ENCODE measurements at regions of chr2 and their contacts with region 1.

Region 1: GRCh38 chr2:219530048-219530963 is 13.3 kb downstream of the CHPF start:
- DNase-seq: peak; percentile 79 to 84 (median 81)
- H3K4me3 ChIP-seq: no peak overlapping the region
- H3K4me3 Mint-ChIP-seq: no peak overlapping the region
- H3K27ac ChIP-seq: no peak overlapping the region
- H3K27ac Mint-ChIP-seq: peak overlapping the region in 1 of 7 donors; percentile 41
- H3K4me1 ChIP-seq: no peaks in the 10 kb centered on the region
- H3K4me1 Mint-ChIP-seq: peaks cover 0 to 7% (median 0%) of the 10 kb centered on the region in 4 donors
- H3K27me3 ChIP-seq: peaks cover 26% of the 10 kb centered on the region
- H3K27me3 Mint-ChIP-seq: peaks cover 53 to 66% of the 10 kb centered on the region in 2 donors

Region 2: DNA sequence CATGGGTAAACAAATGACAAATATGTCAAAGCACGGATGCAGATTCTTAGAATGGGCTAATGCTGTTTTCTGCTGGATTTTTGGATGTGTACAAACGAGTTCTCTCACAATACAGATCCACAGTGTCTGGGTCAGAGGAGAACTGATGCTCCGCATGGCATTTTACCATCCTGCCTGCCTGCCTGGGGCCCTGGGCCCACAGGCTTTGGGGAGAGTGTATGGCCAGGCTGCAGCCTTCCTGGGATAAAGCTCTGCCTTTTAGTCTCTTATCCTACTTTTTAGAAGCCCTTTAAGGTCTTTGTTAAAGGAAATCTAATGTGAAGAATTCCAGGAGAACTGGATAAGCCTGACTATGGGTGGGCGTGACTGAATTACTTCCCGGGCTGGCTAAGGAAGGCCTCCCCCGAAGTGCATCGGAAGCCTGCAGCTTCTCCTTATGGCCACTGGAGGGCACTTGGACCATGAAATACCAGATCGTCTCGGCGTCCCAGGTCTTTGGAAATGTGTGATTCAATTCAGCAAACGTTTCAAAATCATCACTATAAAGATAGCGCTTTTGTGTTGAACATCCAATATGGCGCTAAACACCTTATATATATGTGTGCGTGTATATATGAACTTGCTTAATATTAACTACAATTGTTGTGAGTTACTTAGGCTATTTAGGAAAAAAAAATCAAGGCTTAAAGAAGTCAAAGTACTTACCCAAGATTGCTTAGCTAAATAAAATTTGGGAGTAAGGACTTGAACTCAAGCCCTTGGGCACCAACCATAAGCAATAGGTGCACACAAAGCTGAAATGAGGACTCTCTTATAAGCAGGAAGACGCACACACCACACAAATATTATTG is 127.4 kb before region 1 on chr2:
- CTCF ChIA-PET with region 1: interaction called, 130 read pairs
- POLR2A ChIA-PET with region 1: interaction called, 4 read pairs
- intact Hi-C with region 1: loop called (anchors 1 kb)
- DNase-seq: peak; percentile 51 to 66 (median 58)
- H3K4me3 ChIP-seq: no peak overlapping the region
- H3K4me3 Mint-ChIP-seq: no peak overlapping the region
- H3K27ac ChIP-seq: no peak overlapping the region
- H3K27ac Mint-ChIP-seq: no peak overlapping the region
- H3K4me1 ChIP-seq: no peaks in the 10 kb centered on the region
- H3K4me1 Mint-ChIP-seq: peaks cover 0 to 7% (median 4%) of the 10 kb centered on the region in 4 donors
- H3K27me3 ChIP-seq: no peaks in the 10 kb centered on the region
- H3K27me3 Mint-ChIP-seq: peaks cover 2 to 4% of the 10 kb centered on the region in 2 donors

Region 3: DNA sequence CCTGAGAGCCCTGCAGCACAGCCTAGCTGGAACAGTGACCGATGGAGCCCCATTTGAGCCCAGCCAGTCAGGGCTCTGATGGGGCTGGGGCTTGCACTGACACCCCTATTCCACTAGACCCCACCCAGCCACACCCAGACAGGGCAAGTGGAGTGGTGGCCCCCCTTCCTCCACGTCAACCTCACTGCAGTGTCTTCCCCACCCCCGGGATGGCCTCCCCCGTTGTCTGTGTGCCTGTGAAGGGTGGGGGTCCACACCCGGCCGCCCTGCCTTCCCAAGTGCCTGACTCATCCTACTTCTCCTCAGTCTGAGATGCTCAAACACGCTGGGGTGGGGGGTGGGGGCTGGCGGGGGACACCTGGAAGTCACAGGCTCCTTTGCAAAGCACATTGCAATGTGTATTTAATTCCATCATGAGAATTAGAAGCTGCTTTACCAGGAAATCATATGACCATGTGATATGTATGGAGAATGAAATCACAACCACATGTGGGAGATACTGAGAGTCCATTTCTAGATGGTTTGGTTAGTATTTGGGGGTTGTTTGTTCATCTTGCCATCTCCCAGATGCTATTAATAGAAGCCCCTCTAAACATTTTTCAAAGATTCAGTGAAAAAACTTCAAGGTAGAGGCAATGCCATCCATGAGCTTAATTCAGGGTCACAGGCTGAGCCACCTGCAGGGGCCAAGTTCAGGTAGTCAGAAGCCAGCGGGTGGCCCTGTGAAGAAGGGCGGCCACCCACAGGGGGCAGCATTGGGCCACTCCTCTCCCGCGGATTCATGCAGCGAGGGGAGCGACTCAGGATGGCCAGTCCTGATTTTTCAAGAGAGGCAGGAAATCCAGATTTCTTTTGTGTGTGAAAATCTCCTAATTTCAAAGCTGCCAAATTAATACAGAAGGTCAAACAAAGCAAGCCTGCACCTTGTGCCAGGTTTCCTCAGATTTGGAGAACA is 54.3 kb before region 1 on chr2:
- CTCF ChIA-PET with region 1: interaction called, 57 read pairs
- POLR2A ChIA-PET with region 1: no interaction called
- intact Hi-C with region 1: loop called (anchors 1 kb)
- DNase-seq: peak in 4 of 5 donors; percentile 35 to 46 (median 40)
- H3K4me3 ChIP-seq: no peak overlapping the region
- H3K4me3 Mint-ChIP-seq: no peak overlapping the region
- H3K27ac ChIP-seq: no peak overlapping the region
- H3K27ac Mint-ChIP-seq: no peak overlapping the region
- H3K4me1 ChIP-seq: no peaks in the 10 kb centered on the region
- H3K4me1 Mint-ChIP-seq: peaks cover 0 to 6% (median 5%) of the 10 kb centered on the region in 4 donors
- H3K27me3 ChIP-seq: no peaks in the 10 kb centered on the region
- H3K27me3 Mint-ChIP-seq: peaks cover 0 to 14% of the 10 kb centered on the region in 2 donors

Region 4: GRCh38 chr2:219509780-219510511 is 20.4 kb before region 1 on chr2:
- CTCF ChIA-PET with region 1: interaction called, 26 read pairs
- POLR2A ChIA-PET with region 1: interaction called, 3 read pairs
- intact Hi-C with region 1: loop called (anchors 1 kb)
- DNase-seq: peak; percentile 36 to 66 (median 40)
- H3K4me3 ChIP-seq: no peak overlapping the region
- H3K4me3 Mint-ChIP-seq: peak overlapping the region in 7 of 8 donors; percentile 28 to 75 (median 53)
- H3K27ac ChIP-seq: no peak overlapping the region
- H3K27ac Mint-ChIP-seq: peak overlapping the region in 1 of 7 donors; percentile 36
- H3K4me1 ChIP-seq: peaks cover 25% of the 10 kb centered on the region
- H3K4me1 Mint-ChIP-seq: peaks cover 6 to 33% (median 20%) of the 10 kb centered on the region in 4 donors
- H3K27me3 ChIP-seq: peaks cover 10% of the 10 kb centered on the region
- H3K27me3 Mint-ChIP-seq: peaks cover 36 to 40% of the 10 kb centered on the region in 2 donors

Region 5: DNA sequence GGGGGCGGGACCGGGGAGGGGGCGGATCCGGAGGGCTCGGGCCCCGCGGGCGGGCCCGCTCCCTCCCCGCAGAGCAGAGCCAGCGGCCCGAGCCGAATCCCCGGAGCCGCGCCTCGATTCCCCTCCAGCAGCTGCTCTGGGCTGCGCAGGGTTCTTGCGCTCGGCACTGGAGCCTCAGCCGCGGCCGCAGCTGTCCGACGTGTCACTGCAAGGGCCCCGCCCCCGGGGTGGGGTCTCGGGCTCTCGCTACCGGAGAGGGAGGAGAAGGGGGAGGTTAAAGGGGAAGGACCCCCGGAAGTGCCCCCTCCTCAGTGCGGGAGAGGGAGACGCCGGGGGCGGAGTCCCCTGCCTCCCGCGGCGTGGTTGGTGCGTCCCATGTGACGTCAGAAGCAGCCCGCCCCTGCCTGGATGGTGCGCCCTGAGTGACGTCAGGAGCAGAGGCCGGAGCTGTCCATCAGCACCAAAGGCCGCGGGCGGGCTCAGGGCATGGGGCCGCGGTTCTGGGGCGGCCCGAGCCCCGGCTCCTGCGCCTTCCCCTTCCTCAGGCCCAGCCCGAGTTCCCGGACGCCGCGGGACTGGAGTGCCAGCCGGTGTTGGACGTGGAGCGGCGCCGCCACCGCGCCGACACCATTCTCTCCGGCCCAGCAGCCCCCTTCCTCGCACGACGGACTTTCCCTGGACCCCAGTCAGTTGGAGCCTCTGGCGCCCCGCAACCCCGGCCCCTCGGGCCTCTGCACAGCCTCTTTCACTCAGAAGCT is 13.5 kb after region 1 on chr2 and contains the starts of genes CHPF and TMEM198:
- CTCF ChIA-PET with region 1: interaction called, 60 read pairs
- POLR2A ChIA-PET with region 1: no interaction called
- intact Hi-C with region 1: no loop called
- DNase-seq: peak; percentile 90 to 95 (median 91)
- H3K4me3 ChIP-seq: peak within 1 kb of the TSS; percentile 29 to 75
- H3K4me3 Mint-ChIP-seq: peak within 1 kb of the TSS; percentile 84 to 92 (median 90)
- H3K27ac ChIP-seq: peak within 1 kb of the TSS; percentile 62
- H3K27ac Mint-ChIP-seq: peak within 1 kb of the TSS; percentile 84 to 93 (median 92)
- H3K4me1 ChIP-seq: peaks cover 21% of the 10 kb centered on the region
- H3K4me1 Mint-ChIP-seq: peaks cover 15 to 34% (median 23%) of the 10 kb centered on the region in 4 donors
- H3K27me3 ChIP-seq: no peaks in the 10 kb centered on the region
- H3K27me3 Mint-ChIP-seq: peaks cover 7 to 10% of the 10 kb centered on the region in 2 donors
- total RNA-seq, gene CHPF: 7.7 to 8.5 TPM
- total RNA-seq, gene TMEM198: 0.67 to 0.76 TPM

Region 6: GRCh38 chr2:219571311-219572236 is 41.3 kb after region 1 on chr2 and contains the start of gene OBSL1:
- CTCF ChIA-PET with region 1: no interaction called
- POLR2A ChIA-PET with region 1: no interaction called
- intact Hi-C with region 1: no loop called
- DNase-seq: no peak
- H3K4me3 ChIP-seq: peak within 1 kb of the TSS in 1 of 2 donors; percentile 9
- H3K4me3 Mint-ChIP-seq: peak within 1 kb of the TSS in 6 of 8 donors; percentile 1 to 68 (median 24)
- H3K27ac ChIP-seq: no peak within 1 kb of the TSS
- H3K27ac Mint-ChIP-seq: no peak within 1 kb of the TSS
- H3K4me1 ChIP-seq: peaks cover 3% of the 10 kb centered on the region
- H3K4me1 Mint-ChIP-seq: peaks cover 0 to 3% (median 0%) of the 10 kb centered on the region in 4 donors
- H3K27me3 ChIP-seq: peaks cover 15% of the 10 kb centered on the region
- H3K27me3 Mint-ChIP-seq: peaks cover 27 to 45% of the 10 kb centered on the region in 2 donors
- total RNA-seq, gene OBSL1: 0.09 TPM in 1 of 2 experiments, not detected in the other

Measured in CD4-positive, alpha-beta memory T cell (primary cell).